GM12878 (cell line): ENCODE measurements at regions of chr12 and their contacts with region 1.

Region 1: GRCh38 chr12:5511644-5512600 is 80.0 kb downstream of the NTF3 start:
- DNase-seq: no peak
- ATAC-seq: peak; percentile 63
- H3K4me3 ChIP-seq: no peak overlapping the region
- H3K27ac ChIP-seq: no peak overlapping the region
- H3K4me1 ChIP-seq: no peaks in the 10 kb centered on the region
- H3K27me3 ChIP-seq: no peaks in the 10 kb centered on the region; a peak in 2 of 4 replicates
- CTCF ChIP-seq: peak; percentile 35 to 52 (median 35); a peak in 4 of 6 replicates
- EP300 ChIP-seq: no peak
- POLR2A ChIP-seq: no peak
- RAD21 ChIP-seq: 0 out of 2 replicates have a peak, but pooled peaks have one; percentile 8

Region 2: DNA sequence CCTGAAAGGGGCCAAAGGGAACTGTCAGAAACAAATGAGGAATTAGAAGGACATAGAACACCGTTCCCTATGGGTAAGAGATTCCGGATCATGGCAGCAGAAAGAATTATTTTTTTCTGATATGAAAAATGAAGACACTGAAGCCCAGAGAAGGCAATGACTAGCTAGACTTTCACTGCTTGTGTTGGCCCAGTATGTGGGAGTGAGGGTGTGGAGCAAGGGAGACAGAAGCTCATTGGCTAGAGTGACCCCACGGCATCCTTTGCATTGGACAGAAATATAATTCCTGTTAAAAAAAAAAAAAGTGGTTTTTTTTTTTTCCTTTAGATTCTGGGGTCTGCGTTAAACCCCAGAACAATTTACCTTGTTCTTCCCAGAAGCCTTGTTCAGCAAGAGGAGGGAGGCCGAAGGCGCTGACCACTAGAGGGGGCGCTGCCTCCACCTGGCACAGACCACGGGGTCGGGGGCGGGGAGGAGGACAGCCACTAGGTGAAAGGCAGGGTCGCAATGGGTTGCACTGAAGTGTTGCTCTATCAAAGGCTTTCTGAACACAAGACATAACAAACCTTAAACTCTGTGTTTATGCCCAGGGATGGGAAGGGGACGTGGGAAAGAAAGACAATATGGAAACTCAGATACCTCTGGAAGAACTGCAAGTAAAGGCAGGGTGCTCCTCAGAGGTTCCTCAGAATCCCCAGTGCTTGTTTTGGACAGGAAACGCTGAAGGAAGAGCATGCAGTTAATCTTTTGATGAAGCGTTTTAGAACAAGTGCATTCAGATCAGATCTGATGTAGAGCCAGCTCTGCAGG is 311.4 kb before region 1 on chr12:
- CTCF ChIA-PET with region 1: interaction called, 4 read pairs
- POLR2A ChIA-PET with region 1: no interaction called
- RAD21 ChIA-PET with region 1: no interaction called
- SMC1A ChIA-PET with region 1: no interaction called
- in situ Hi-C with region 1: no loop called
- intact Hi-C with region 1: loop called (anchors 10 kb)
- DNase-seq: no peak
- ATAC-seq: peak; percentile 77
- H3K4me3 ChIP-seq: no peak overlapping the region
- H3K27ac ChIP-seq: no peak overlapping the region
- H3K4me1 ChIP-seq: no peaks in the 10 kb centered on the region
- H3K27me3 ChIP-seq: peaks cover 2 to 4% of the 10 kb centered on the region in 2 experiments; a peak in 3 of 4 replicates
- CTCF ChIP-seq: peak; percentile 50 to 70 (median 54)
- EP300 ChIP-seq: no peak
- POLR2A ChIP-seq: no peak
- RAD21 ChIP-seq: peak; percentile 58